WTC11 (cell line): ENCODE measurements at regions of chr2 and their contacts with region 1.

Region 1: GRCh38 chr2:54106631-54107454 is 8.6 kb upstream of the ACYP2 start:
- DNase-seq: no peak
- ATAC-seq: peak; percentile 45
- H3K4me3 Mint-ChIP-seq: no peak overlapping the region
- H3K27ac Mint-ChIP-seq: peak overlapping the region; percentile 32; the same call in 1 of the 2 replicates
- H3K4me1 Mint-ChIP-seq: peaks cover 8% of the 10 kb centered on the region
- H3K27me3 Mint-ChIP-seq: no peaks in the 10 kb centered on the region
- CTCF ChIP-seq: peak; percentile 31; the same call in 1 of the 2 replicates

Region 2: DNA sequence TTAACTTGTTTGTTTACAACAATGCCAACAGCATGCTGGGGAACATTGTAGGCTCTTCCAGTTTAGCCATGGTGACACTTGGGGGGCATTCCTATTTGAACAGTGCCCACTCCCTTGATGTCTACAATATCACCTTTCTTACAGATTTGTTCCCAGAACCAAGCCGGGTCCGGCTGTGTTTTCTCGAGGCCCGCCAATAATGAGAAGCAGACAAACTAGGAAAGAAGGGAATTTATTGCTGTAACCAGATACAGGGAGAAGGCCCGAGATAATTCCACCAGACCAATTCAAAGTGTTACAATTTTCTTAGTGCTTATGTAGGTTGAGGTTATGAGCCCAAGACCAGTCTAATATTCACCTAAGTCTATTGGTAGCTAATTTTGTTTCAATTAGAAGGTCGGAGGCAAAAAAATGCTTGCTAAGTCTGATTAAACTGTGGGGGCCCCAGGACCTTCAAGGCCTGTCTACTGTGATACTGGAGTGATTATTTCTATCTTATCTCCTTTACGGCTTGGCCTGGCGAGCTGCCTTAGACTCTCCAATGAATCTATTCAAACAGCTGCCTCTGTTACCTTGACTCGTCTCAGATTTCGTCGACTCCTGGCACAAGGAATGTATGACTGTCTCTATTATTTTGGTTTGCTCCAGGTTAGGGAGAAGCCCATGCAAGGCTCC is 77.0 kb before region 1 on chr2:
- CTCF ChIA-PET with region 1: no interaction called
- POLR2A ChIA-PET with region 1: no interaction called
- DNase-seq: no peak
- ATAC-seq: peak; percentile 22; the same call in 1 of the 2 replicates
- H3K4me3 Mint-ChIP-seq: no peak overlapping the region
- H3K27ac Mint-ChIP-seq: peak overlapping the region; percentile 16; the same call in 1 of the 2 replicates
- H3K4me1 Mint-ChIP-seq: peaks cover 9% of the 10 kb centered on the region
- H3K27me3 Mint-ChIP-seq: no peaks in the 10 kb centered on the region
- CTCF ChIP-seq: no peak

Region 3: DNA sequence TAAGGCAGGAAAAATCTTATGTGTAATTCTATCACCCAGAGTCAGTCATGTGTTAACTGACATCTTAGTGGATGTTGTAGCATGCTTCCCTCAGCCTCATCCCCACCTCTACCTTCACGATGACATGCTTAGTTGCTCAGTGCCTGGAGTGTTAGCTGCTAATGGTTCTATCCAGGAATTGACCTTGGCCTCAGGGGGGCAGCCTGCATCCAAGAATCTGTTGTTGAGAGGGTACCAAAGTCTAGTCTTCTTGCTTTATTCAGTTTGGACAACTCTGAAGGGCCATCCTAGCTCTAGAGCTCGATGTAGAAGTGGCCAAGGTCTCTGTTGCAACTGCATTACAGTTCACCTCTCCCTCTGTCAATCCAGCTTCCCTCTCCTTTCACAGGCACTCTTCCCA is 69.7 kb after region 1 on chr2:
- CTCF ChIA-PET with region 1: interaction called, 18 read pairs
- POLR2A ChIA-PET with region 1: no interaction called
- DNase-seq: peak; percentile 64
- ATAC-seq: peak; percentile 96
- H3K4me3 Mint-ChIP-seq: no peak overlapping the region
- H3K27ac Mint-ChIP-seq: no peak overlapping the region
- H3K4me1 Mint-ChIP-seq: no peaks in the 10 kb centered on the region
- H3K27me3 Mint-ChIP-seq: no peaks in the 10 kb centered on the region
- CTCF ChIP-seq: no peak

Region 4: DNA sequence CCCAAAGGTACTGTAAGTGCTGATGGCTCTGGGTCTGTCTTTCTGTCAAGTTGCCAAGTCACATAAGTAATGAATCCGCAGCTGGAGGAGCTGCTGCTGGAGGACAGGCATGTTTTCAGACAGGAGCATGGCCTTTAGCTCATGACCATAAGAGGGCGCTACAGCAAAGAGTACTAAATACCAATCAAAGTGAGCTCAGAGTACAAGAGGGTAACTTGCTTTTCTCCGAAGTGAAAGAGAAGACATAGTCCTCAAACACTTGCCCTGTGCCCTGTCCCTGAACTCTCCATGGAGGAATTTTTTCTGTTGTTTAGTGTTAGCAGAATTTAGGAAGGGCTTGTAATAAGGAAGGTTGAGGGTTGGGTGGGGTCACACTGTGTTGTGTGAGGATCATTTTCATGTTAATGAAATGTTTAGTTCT is 558.6 kb after region 1 on chr2:
- CTCF ChIA-PET with region 1: interaction called, 20 read pairs
- POLR2A ChIA-PET with region 1: no interaction called
- DNase-seq: peak; percentile 65
- ATAC-seq: peak; percentile 94
- H3K4me3 Mint-ChIP-seq: no peak overlapping the region
- H3K27ac Mint-ChIP-seq: peak overlapping the region; percentile 76
- H3K4me1 Mint-ChIP-seq: peaks cover 9% of the 10 kb centered on the region
- H3K27me3 Mint-ChIP-seq: no peaks in the 10 kb centered on the region
- CTCF ChIP-seq: peak; percentile 74

Region 5: GRCh38 chr2:54704688-54705605 is 598.1 kb after region 1 on chr2:
- CTCF ChIA-PET with region 1: interaction called, 29 read pairs
- POLR2A ChIA-PET with region 1: interaction called, 4 read pairs
- DNase-seq: no peak
- ATAC-seq: no peak
- H3K4me3 Mint-ChIP-seq: no peak overlapping the region
- H3K27ac Mint-ChIP-seq: no peak overlapping the region
- H3K4me1 Mint-ChIP-seq: 0 out of 2 replicates have a peak, but pooled peaks cover 6% of the 10 kb centered on the region
- H3K27me3 Mint-ChIP-seq: peaks cover 4% of the 10 kb centered on the region
- CTCF ChIP-seq: no peak